ENCODE measurements at regions of chr18 and their contacts with region 1.

Region 1: DNA sequence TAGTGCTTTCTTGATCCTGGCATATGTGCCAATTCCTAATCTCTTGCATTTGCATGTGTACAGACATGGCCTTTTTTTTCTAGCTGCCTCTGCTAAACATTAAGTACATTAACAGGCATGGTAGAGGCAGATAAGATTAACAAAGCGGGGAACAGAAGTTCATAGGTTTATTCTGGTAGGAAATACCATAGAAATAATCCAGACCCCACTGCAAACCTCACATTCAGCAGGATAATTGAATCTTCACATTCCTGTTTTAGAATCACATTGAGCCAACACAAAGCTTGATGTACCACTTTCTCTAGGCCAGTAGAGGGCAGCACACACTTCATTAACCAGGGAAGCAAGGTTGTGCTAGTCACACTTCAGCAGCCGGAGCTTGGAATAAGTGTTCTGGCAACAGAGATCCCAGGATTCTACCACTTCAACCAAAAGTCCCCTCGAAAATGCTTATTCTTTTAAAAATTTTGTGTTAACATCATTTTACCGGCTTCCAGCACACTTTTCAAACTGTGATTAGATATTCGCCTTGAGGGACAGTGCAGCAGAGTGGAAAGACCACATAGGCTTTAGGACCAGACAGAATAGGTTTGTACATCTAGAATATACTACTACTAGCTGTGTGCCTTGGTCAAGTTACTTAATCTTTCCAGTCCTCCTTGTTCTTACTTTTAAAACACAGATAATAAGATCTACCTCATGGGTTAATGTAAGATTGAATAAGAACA is 420.2 kb upstream of the CHST9 start:
- DNase-seq: no peak
- H3K4me3 ChIP-seq: no peak overlapping the region
- H3K27ac ChIP-seq: no peak overlapping the region
- H3K4me1 ChIP-seq: no peaks in the 10 kb centered on the region
- H3K27me3 ChIP-seq: no peaks in the 10 kb centered on the region
- CTCF ChIP-seq: peak in 5 of 6 experiments; percentile 47 to 73 (median 69)
- POLR2A ChIP-seq: no peak

Region 2: DNA sequence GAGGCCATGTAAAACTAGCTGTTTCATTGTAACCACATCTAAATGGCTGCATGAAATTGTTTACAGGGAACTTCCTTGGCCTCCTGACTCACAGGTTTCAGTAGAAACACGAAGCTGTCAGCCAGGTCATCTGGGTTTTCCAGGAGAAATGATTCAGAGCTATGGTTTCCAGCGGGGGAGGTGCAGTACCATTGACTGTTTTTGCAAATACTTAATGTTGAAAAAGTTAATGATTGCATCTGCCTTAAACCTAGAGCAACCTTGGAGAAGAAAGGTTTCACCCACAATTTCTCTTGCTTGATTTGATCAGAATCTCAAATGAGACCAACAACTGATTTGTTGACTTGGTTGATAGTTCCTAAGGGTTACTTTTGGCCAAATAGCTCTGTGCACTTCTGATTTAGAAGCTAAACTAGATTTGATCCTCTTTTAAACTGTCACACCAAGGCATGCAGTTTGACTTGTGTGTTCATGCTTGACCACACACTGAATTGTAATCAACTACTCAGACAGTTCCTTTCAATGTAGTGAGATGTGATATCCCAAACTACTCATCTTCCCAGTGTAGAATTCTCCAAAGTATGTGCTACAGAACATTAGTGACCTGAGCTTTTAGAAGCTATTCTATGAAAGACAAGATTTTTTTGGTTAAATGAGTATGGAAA is 226.7 kb before region 1 on chr18:
- intact Hi-C with region 1: loop called (anchors 10 kb)
- DNase-seq: no peak
- H3K4me3 ChIP-seq: no peak overlapping the region
- H3K27ac ChIP-seq: no peak overlapping the region
- H3K4me1 ChIP-seq: no peaks in the 10 kb centered on the region
- H3K27me3 ChIP-seq: no peaks in the 10 kb centered on the region
- CTCF ChIP-seq: no peak
- POLR2A ChIP-seq: no peak

Region 3: DNA sequence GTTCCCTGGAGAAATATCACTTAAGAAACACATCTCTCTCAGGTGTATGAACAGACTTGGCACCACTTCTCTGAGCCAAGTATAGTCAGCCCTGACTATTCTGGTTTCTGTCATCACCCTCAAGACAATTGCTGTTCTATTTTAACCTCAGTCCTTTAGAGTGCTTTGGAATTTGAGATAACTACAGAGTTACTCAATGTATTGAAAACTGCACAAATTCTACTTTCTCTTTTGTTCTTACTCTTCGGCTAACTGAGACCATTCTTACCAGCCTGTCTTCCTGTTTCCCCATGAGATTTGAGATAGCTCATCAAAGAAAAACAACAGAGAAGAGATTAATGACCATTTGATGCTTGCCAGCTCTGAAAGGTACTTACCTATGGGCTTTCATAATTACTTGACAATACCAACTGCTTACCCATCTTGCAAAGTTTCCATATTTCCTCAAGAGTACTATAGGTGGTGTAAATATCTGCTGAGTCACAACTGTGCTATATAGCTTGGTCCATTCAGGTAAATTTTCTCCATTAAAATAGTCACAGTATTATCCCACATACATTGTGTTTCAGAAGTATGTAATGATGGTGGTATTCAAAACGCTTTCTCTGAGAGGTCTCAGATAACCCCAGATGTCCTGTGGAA is 47.3 kb after region 1 on chr18:
- intact Hi-C with region 1: no loop called
- DNase-seq: no peak
- H3K4me3 ChIP-seq: no peak overlapping the region
- H3K27ac ChIP-seq: no peak overlapping the region
- H3K4me1 ChIP-seq: no peaks in the 10 kb centered on the region
- H3K27me3 ChIP-seq: no peaks in the 10 kb centered on the region
- CTCF ChIP-seq: no peak
- POLR2A ChIP-seq: no peak

Region 4: GRCh38 chr18:27685807-27686412 is 80.6 kb after region 1 on chr18:
- intact Hi-C with region 1: no loop called
- DNase-seq: no peak
- H3K4me3 ChIP-seq: no peak overlapping the region
- H3K27ac ChIP-seq: no peak overlapping the region
- H3K4me1 ChIP-seq: no peaks in the 10 kb centered on the region
- H3K27me3 ChIP-seq: no peaks in the 10 kb centered on the region
- CTCF ChIP-seq: peak in 4 of 6 experiments; percentile 33 to 68 (median 61)
- POLR2A ChIP-seq: no peak

Region 5: GRCh38 chr18:27750014-27750413 is 144.7 kb after region 1 on chr18:
- intact Hi-C with region 1: no loop called
- DNase-seq: no peak
- H3K4me3 ChIP-seq: no peak overlapping the region
- H3K27ac ChIP-seq: no peak overlapping the region
- H3K4me1 ChIP-seq: no peaks in the 10 kb centered on the region
- H3K27me3 ChIP-seq: no peaks in the 10 kb centered on the region
- CTCF ChIP-seq: peak in 1 of 6 experiments; percentile 17
- POLR2A ChIP-seq: no peak

Region 6: GRCh38 chr18:27769152-27769551 is 163.9 kb after region 1 on chr18:
- intact Hi-C with region 1: no loop called
- DNase-seq: no peak
- H3K4me3 ChIP-seq: no peak overlapping the region
- H3K27ac ChIP-seq: no peak overlapping the region
- H3K4me1 ChIP-seq: no peaks in the 10 kb centered on the region
- H3K27me3 ChIP-seq: no peaks in the 10 kb centered on the region
- CTCF ChIP-seq: no peak
- POLR2A ChIP-seq: no peak

Region 7: DNA sequence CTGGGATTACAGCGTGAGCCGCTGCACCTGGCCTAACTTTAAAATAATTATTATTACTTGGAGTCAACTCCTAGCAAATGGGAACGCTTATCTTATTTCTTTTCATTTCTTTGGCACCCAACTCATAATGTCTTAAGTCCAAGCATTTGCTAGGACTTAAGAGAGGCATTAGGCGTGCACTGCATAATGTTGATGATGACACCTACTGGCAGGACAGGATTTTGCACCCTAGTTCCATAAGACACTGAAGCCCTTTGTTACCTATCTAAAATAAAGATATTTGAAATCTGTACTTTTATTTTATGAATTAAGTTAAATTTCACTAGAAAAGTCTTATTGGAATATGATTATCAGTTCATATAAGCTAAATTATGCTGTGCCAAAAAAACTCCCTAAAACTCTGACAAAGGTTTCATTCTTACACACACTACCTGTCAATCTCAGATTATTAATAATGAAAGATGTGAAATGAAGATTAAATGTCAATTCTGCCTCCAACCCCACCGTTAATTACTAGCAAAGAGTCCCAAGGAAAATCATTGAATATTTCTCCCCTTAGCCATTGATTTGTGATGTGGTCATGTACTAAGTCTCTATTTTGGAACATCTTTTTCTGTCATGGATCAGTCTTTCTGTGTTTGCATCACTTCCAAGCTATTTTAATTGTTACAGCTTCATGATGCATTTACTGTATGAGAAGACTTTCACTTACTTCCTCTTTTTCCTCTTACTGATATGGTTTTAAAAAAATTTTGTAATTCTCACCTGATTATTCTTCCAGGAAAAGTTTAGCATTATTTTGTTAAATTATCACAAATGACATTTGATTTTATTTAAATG is 584.3 kb after region 1 on chr18:
- intact Hi-C with region 1: loop called (anchors 10 kb)
- DNase-seq: no peak
- H3K4me3 ChIP-seq: no peak overlapping the region
- H3K27ac ChIP-seq: no peak overlapping the region
- H3K4me1 ChIP-seq: no peaks in the 10 kb centered on the region
- H3K27me3 ChIP-seq: peaks cover 0 to 9% (median 0%) of the 10 kb centered on the region in 4 donors
- CTCF ChIP-seq: peak in 5 of 6 experiments; percentile 26 to 69 (median 46)
- POLR2A ChIP-seq: no peak